B cell (primary cell): ENCODE measurements at regions of chr9 and their contacts with region 1.

Region 1: DNA sequence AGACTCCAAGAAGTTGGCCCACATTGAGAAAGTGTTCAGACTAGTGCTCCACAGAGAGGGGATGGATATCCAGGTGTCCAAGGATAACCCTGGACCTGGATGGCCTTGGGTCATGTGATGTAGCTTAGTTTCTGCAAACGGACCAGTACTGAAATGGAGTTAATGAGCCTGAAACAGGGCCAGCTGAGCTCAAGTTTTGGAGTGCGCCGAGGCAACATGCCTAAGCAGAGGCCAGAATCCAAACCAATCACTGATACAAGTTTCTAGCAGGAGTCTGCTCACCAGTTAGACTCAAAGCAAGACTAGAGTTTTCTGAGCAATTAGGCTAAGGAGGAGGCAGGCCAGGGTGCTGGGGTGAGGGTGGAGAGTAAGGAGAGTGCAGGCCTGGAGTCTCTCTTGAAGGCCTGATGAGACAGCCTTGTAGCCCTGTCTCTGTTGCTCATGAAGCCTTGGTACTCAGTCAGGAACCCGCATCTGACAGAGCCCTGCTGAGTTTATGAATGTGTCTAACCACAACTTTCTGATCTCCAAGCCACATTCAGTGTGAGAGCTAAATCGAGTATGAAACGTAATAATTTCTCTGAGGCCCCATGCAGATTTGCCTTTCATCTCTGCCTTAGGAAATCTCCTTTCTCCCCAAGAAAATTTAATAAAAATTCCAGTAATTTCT is 68.9 kb upstream of the EQTN start:
- DNase-seq: no peak
- ATAC-seq: peak; percentile 28
- H3K4me3 ChIP-seq: peak overlapping the region in 1 of 5 experiments; percentile 1
- H3K4me3 Mint-ChIP-seq: peak overlapping the region; percentile 81
- H3K27ac ChIP-seq: no peak overlapping the region
- H3K27ac Mint-ChIP-seq: peak overlapping the region; percentile 28
- H3K4me1 ChIP-seq: peaks cover 56 to 60% of the 10 kb centered on the region in 2 donors
- H3K4me1 Mint-ChIP-seq: peaks cover 56% of the 10 kb centered on the region
- H3K27me3 ChIP-seq: no peaks in the 10 kb centered on the region
- H3K27me3 Mint-ChIP-seq: no peaks in the 10 kb centered on the region
- CTCF ChIP-seq: no peak

Region 2: GRCh38 chr9:27162045-27162444 is 203.8 kb before region 1 on chr9:
- CTCF ChIA-PET with region 1: no interaction called
- POLR2A ChIA-PET with region 1: no interaction called
- intact Hi-C with region 1: no loop called
- DNase-seq: no peak
- ATAC-seq: no peak
- H3K4me3 ChIP-seq: no peak overlapping the region
- H3K4me3 Mint-ChIP-seq: no peak overlapping the region
- H3K27ac ChIP-seq: no peak overlapping the region
- H3K27ac Mint-ChIP-seq: no peak overlapping the region
- H3K4me1 ChIP-seq: no peaks in the 10 kb centered on the region
- H3K4me1 Mint-ChIP-seq: no peaks in the 10 kb centered on the region
- H3K27me3 ChIP-seq: no peaks in the 10 kb centered on the region
- H3K27me3 Mint-ChIP-seq: no peaks in the 10 kb centered on the region
- CTCF ChIP-seq: no peak

Region 3: GRCh38 chr9:27353474-27354229 is 12.2 kb before region 1 on chr9:
- CTCF ChIA-PET with region 1: interaction called, 4 read pairs
- POLR2A ChIA-PET with region 1: no interaction called
- intact Hi-C with region 1: loop called (anchors 2 kb)
- DNase-seq: peak; percentile 48
- ATAC-seq: peak; percentile 68
- H3K4me3 ChIP-seq: no peak overlapping the region
- H3K4me3 Mint-ChIP-seq: no peak overlapping the region
- H3K27ac ChIP-seq: peak overlapping the region; percentile 0 to 58
- H3K27ac Mint-ChIP-seq: peak overlapping the region; percentile 84
- H3K4me1 ChIP-seq: peaks cover 31 to 34% of the 10 kb centered on the region in 2 donors
- H3K4me1 Mint-ChIP-seq: peaks cover 54% of the 10 kb centered on the region
- H3K27me3 ChIP-seq: no peaks in the 10 kb centered on the region
- H3K27me3 Mint-ChIP-seq: no peaks in the 10 kb centered on the region
- CTCF ChIP-seq: peak; percentile 16

Region 4: GRCh38 chr9:27386571-27387091 is 20.8 kb after region 1 on chr9:
- CTCF ChIA-PET with region 1: interaction called, 7 read pairs
- POLR2A ChIA-PET with region 1: no interaction called
- intact Hi-C with region 1: loop called (anchors 2 kb)
- DNase-seq: no peak
- ATAC-seq: no peak
- H3K4me3 ChIP-seq: no peak overlapping the region
- H3K4me3 Mint-ChIP-seq: peak overlapping the region; percentile 34
- H3K27ac ChIP-seq: peak overlapping the region in 1 of 2 donors; percentile 50
- H3K27ac Mint-ChIP-seq: peak overlapping the region; percentile 71
- H3K4me1 ChIP-seq: peaks cover 77% of the 10 kb centered on the region in 2 donors
- H3K4me1 Mint-ChIP-seq: peaks cover 88% of the 10 kb centered on the region
- H3K27me3 ChIP-seq: no peaks in the 10 kb centered on the region
- H3K27me3 Mint-ChIP-seq: no peaks in the 10 kb centered on the region
- CTCF ChIP-seq: no peak

Region 5: DNA sequence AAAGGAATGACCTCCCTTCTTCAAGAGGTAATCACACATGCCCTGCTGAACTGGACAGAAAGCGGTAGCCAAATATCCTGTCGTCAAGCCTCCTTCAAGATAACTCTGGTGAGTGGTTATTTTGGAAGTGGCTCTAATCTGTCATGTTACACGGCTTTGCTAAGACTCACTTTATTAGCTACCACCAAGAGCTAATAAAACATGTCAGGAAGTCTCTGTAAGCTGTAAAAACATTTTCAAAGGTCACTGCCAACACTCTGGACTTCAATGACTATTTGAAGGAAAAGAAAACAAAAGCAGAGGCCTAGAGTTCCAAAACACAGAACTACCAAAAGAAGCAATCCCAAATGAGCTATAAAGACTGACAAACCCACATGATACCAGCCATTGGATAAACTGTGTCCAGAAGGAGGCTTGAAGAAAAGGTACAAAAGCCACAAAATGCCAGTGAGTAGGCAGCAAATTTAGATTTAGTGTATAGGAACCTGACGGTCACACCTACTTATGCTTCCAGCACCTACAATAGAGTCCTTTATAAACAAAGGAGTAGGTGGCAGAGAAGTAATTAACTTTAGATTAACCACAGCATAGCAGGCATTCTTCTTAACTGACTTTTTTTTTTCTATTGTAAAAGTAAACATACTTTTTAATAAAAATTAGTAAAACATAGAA is 28.4 kb after region 1 on chr9:
- CTCF ChIA-PET with region 1: no interaction called
- POLR2A ChIA-PET with region 1: no interaction called
- intact Hi-C with region 1: loop called (anchors 2 kb)
- DNase-seq: no peak
- ATAC-seq: no peak
- H3K4me3 ChIP-seq: no peak overlapping the region
- H3K4me3 Mint-ChIP-seq: no peak overlapping the region
- H3K27ac ChIP-seq: peak overlapping the region; percentile 28 to 68
- H3K27ac Mint-ChIP-seq: peak overlapping the region; percentile 34
- H3K4me1 ChIP-seq: peaks cover 51 to 58% of the 10 kb centered on the region in 2 donors
- H3K4me1 Mint-ChIP-seq: peaks cover 71% of the 10 kb centered on the region
- H3K27me3 ChIP-seq: no peaks in the 10 kb centered on the region
- H3K27me3 Mint-ChIP-seq: no peaks in the 10 kb centered on the region
- CTCF ChIP-seq: no peak